B cell (primary cell): ENCODE measurements at regions of chr18 and their contacts with region 1.

Region 1: DNA sequence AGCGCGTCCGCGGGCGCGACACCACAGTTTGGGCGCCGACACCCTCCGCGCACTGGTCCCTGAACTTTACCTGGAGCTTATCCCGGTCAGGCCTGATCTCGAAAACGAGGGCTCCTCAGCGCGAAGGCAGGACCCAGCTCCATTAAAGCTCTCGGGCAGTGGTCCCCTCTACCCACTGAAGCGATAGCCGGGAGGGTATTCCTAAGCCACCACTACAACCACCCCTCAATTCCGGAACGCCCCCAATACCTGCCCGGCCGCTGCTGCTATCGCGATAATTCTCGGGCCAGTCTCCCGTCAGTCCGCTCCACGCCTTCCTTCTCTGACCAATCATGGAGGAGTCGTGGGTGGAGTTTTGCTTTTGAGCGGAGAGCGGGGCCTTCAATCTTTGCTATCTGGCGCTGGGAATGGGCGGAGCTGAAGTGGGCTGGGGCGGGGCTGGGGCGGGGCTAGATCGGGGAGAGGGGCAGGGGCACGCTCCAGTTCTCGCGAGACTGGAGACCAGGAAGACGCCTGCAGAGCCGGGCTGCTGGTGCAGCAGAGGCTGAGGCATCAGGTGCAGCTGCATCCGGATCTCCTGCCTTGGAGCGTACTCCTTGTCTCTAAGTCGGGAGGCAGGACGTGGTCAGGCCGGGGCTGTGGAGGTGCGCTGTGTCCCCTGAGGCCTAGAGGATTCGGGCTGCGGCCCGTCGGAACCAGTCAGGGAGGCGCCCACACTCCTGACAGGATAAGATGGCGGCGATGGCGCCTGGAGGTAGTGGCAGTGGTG is at the starts of genes PIGN and RELCH:
- DNase-seq: peak; percentile 98
- ATAC-seq: peak; percentile 95
- H3K4me3 ChIP-seq: peak within 1 kb of the TSS; percentile 87 to 100 (median 97)
- H3K4me3 Mint-ChIP-seq: peak within 1 kb of the TSS; percentile 98
- H3K27ac ChIP-seq: peak within 1 kb of the TSS; percentile 73
- H3K27ac Mint-ChIP-seq: peak within 1 kb of the TSS; percentile 96
- H3K4me1 ChIP-seq: peaks cover 30 to 37% of the 10 kb centered on the region in 2 donors
- H3K4me1 Mint-ChIP-seq: peaks cover 61% of the 10 kb centered on the region
- H3K27me3 ChIP-seq: no peaks in the 10 kb centered on the region
- H3K27me3 Mint-ChIP-seq: no peaks in the 10 kb centered on the region
- CTCF ChIP-seq: no peak
- total RNA-seq, gene PIGN: 37.3 and 43.8 TPM in 2 replicates
- total RNA-seq, gene RELCH: 76.0 and 77.9 TPM in 2 replicates

Region 2: GRCh38 chr18:62249478-62250097 is 62.6 kb after region 1 on chr18:
- CTCF ChIA-PET with region 1: interaction called, 145 read pairs
- POLR2A ChIA-PET with region 1: interaction called, 3 read pairs
- intact Hi-C with region 1: loop called (anchors 1 kb)
- DNase-seq: peak; percentile 71
- ATAC-seq: peak; percentile 41
- H3K4me3 ChIP-seq: no peak overlapping the region
- H3K4me3 Mint-ChIP-seq: no peak overlapping the region
- H3K27ac ChIP-seq: no peak overlapping the region
- H3K27ac Mint-ChIP-seq: no peak overlapping the region
- H3K4me1 ChIP-seq: no peaks in the 10 kb centered on the region
- H3K4me1 Mint-ChIP-seq: no peaks in the 10 kb centered on the region
- H3K27me3 ChIP-seq: no peaks in the 10 kb centered on the region
- H3K27me3 Mint-ChIP-seq: no peaks in the 10 kb centered on the region
- CTCF ChIP-seq: peak; percentile 89

Region 3: DNA sequence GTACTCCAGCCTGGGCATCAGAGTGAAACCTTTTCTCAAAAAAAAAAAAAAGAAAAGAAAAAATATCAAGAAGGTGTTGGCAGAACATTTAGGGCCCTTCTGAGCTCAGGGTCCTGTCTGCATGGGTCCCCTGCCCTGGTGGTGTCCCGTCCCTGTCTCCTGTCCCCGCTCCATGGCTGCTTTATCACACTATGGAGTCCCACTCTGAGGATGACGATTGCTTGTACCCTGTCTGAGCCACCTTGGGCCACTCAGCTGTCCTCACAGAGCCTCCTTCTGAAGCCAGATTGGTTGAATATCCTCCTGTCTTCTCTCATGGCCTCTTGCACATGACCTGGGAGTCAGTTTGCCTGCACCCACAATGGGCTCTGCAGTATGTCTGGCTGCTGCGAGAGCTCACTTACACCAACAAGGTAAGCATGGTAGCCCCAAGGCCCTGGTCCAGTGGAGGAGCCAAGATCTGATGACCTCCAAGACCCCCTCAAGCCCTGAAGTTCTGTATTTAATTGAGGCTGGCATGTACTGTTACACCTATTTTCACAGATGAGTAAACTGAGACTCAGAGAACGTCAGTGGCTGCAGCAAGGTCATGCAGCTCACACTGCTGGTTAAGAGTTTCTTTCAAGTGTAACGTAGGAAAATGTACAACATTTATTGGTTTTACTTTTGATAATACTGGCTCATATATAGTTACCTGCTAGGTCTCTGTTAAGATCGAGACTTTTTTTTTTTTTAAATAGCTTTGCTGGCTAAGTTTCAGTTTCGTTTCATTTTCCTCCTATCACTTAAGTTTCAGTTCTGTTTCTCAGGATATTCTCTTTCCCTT is 318.9 kb after region 1 on chr18:
- CTCF ChIA-PET with region 1: no interaction called
- POLR2A ChIA-PET with region 1: no interaction called
- intact Hi-C with region 1: loop called (anchors 2 kb)
- DNase-seq: peak; percentile 78
- ATAC-seq: peak; percentile 84
- H3K4me3 ChIP-seq: peak overlapping the region; percentile 27 to 58 (median 56)
- H3K4me3 Mint-ChIP-seq: peak overlapping the region; percentile 79
- H3K27ac ChIP-seq: peak overlapping the region; percentile 61 to 72
- H3K27ac Mint-ChIP-seq: peak overlapping the region; percentile 95
- H3K4me1 ChIP-seq: peaks cover 15 to 16% of the 10 kb centered on the region in 2 donors
- H3K4me1 Mint-ChIP-seq: peaks cover 13% of the 10 kb centered on the region
- H3K27me3 ChIP-seq: no peaks in the 10 kb centered on the region
- H3K27me3 Mint-ChIP-seq: no peaks in the 10 kb centered on the region
- CTCF ChIP-seq: no peak

Region 4: GRCh38 chr18:62584241-62585120 is 397.5 kb after region 1 on chr18:
- CTCF ChIA-PET with region 1: interaction called, 5 read pairs
- POLR2A ChIA-PET with region 1: no interaction called
- intact Hi-C with region 1: loop called (anchors 1 kb)
- DNase-seq: peak; percentile 88
- ATAC-seq: peak; percentile 94
- H3K4me3 ChIP-seq: no peak overlapping the region
- H3K4me3 Mint-ChIP-seq: peak overlapping the region; percentile 35
- H3K27ac ChIP-seq: no peak overlapping the region
- H3K27ac Mint-ChIP-seq: peak overlapping the region; percentile 11
- H3K4me1 ChIP-seq: peaks cover 13 to 20% of the 10 kb centered on the region in 2 donors
- H3K4me1 Mint-ChIP-seq: peaks cover 16% of the 10 kb centered on the region
- H3K27me3 ChIP-seq: no peaks in the 10 kb centered on the region
- H3K27me3 Mint-ChIP-seq: no peaks in the 10 kb centered on the region
- CTCF ChIP-seq: peak; percentile 94

Region 5: GRCh38 chr18:63155169-63155852 is 968.4 kb after region 1 on chr18:
- CTCF ChIA-PET with region 1: no interaction called
- POLR2A ChIA-PET with region 1: no interaction called
- intact Hi-C with region 1: loop called (anchors 10 kb)
- DNase-seq: peak; percentile 90
- ATAC-seq: peak; percentile 65
- H3K4me3 ChIP-seq: peak overlapping the region in 4 of 5 experiments; percentile 15 to 48 (median 34)
- H3K4me3 Mint-ChIP-seq: peak overlapping the region; percentile 80
- H3K27ac ChIP-seq: peak overlapping the region; percentile 57 to 89
- H3K27ac Mint-ChIP-seq: peak overlapping the region; percentile 96
- H3K4me1 ChIP-seq: peaks cover 69 to 70% of the 10 kb centered on the region in 2 donors
- H3K4me1 Mint-ChIP-seq: peaks cover 95% of the 10 kb centered on the region
- H3K27me3 ChIP-seq: no peaks in the 10 kb centered on the region
- H3K27me3 Mint-ChIP-seq: no peaks in the 10 kb centered on the region
- CTCF ChIP-seq: peak; percentile 84

Region 6: GRCh38 chr18:63969960-63970802 is 1783.2 kb after region 1 on chr18 and contains the start of gene SERPINB8:
- CTCF ChIA-PET with region 1: no interaction called
- POLR2A ChIA-PET with region 1: no interaction called
- intact Hi-C with region 1: loop called (anchors 2 kb)
- DNase-seq: peak; percentile 77
- ATAC-seq: peak; percentile 84
- H3K4me3 ChIP-seq: peak within 1 kb of the TSS; percentile 57 to 98 (median 81)
- H3K4me3 Mint-ChIP-seq: peak within 1 kb of the TSS; percentile 93
- H3K27ac ChIP-seq: peak within 1 kb of the TSS; percentile 91 to 95
- H3K27ac Mint-ChIP-seq: peak within 1 kb of the TSS; percentile 96
- H3K4me1 ChIP-seq: peaks cover 28 to 33% of the 10 kb centered on the region in 2 donors
- H3K4me1 Mint-ChIP-seq: peaks cover 51% of the 10 kb centered on the region
- H3K27me3 ChIP-seq: no peaks in the 10 kb centered on the region
- H3K27me3 Mint-ChIP-seq: no peaks in the 10 kb centered on the region
- CTCF ChIP-seq: no peak
- total RNA-seq, gene SERPINB8: 22.1 and 26.2 TPM in 2 replicates